Activated naive CD4-positive, alpha-beta T cell treated with anti-CD3 and anti-CD28 coated beads for 36 hours (primary cell): ENCODE measurements at regions of chr12 and their contacts with region 1.

Region 1: DNA sequence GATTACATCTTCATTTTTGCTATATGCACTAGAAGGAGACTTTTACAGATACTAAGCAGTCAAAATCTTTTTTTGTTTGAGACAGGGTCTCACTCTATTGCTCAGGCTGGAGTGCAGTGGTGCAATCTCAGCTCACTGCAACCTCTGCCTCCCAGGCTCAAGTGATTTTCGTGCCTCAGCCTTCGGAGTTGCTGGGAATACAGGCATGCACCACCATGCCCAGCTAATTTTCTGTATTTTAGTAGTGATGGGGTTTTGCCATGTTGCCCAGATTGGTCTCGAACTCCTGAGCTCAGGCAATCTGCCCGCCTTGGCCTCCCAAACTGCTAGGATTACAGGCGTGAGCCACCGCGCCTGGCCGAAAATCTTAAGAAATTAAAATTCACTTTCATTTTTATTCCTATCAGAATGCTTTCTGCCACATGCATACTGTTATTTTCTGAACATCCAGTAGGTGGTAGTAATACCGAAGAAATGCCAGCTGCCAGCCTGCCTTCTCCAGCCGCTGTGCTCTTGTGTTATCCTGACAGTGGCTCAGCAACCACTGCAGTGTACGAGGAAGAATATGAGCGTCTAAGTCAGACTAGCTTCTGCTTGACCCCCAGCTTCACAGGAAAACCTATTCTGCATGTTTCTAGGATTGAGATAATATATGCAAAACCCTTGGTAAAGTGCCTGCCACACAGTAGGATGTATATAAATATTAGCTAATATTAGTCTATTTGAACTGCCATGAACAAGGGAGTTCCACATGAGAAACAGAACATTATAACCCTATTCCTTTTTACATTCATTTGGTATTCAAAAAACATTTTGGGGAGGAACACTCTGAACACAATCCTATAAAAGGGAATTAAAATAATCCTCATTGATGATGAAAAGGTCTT is 54.2 kb downstream of the RPAP3 start:
- DNase-seq: peak; percentile 70
- H3K4me3 Mint-ChIP-seq: no peak overlapping the region
- H3K27ac Mint-ChIP-seq: peak overlapping the region; percentile 26
- H3K4me1 Mint-ChIP-seq: peaks cover 18% of the 10 kb centered on the region
- H3K27me3 Mint-ChIP-seq: no peaks in the 10 kb centered on the region

Region 2: DNA sequence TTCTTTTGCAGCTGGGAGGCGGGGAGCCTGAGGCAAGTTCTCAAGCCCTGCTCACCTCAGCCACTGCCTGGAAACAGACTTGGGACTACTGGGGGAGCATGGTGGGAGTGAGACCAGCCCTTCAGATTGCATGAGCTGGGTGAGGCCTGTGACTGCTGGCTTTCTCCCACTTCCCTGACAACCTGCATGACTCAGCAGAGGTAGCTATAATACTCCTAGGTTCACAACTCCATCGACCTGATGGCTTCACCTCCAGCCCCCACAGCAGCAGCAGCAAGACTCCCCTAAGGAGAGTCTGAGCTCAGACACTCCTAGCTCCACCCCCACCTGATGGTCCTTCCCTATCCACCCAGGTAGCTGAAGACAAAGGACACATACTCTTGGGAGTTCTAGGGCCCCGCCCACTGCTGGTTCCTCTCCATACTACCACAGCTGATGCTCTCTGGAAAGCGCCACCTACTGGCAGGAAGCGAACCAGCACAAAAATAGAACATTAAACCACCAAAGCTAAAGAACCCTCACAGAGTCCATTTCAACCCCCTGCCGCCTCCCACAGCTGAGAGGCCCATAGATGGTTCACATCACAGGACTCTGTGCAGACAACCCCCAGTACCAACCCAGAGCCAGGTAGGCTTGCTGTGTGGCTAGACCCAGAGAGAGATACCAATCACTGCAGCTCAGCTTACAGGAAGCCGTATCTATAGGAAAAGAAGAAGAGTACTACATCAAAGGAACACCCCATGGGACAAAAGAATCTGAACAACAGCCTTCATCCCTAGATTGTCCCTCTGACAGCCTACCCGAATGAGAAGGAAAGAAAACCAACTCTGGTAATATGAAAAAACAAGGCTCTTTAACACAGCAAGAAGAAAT is 14.5 kb before region 1 on chr12:
- CTCF ChIA-PET with region 1: interaction called, 14 read pairs
- intact Hi-C with region 1: no loop called
- DNase-seq: peak; percentile 68
- H3K4me3 Mint-ChIP-seq: no peak overlapping the region
- H3K27ac Mint-ChIP-seq: no peak overlapping the region
- H3K4me1 Mint-ChIP-seq: peaks cover 2% of the 10 kb centered on the region
- H3K27me3 Mint-ChIP-seq: no peaks in the 10 kb centered on the region

Region 3: DNA sequence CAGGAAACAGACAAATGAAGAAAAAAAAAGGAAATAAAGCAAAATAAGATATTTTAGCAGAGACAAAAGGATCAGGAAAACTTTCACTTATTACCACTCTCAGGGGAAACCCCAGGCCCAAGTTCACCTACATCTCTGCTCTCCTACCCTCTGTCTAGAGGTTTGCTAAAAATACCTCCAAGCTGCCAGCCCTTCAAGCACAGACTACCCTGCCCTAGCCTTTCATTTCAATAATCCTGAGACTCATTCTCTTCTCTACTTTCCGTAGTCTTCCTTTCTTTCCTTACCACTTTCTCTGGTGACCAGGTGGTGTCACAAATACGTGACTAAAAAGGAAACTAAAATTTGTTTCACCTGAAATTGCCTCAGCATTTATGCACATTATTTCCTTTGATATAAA is 20.5 kb after region 1 on chr12:
- CTCF ChIA-PET with region 1: interaction called, 6 read pairs
- intact Hi-C with region 1: loop called (anchors 2 kb)
- DNase-seq: no peak
- H3K4me3 Mint-ChIP-seq: no peak overlapping the region
- H3K27ac Mint-ChIP-seq: peak overlapping the region; percentile 5
- H3K4me1 Mint-ChIP-seq: peaks cover 26% of the 10 kb centered on the region
- H3K27me3 Mint-ChIP-seq: no peaks in the 10 kb centered on the region

Region 4: DNA sequence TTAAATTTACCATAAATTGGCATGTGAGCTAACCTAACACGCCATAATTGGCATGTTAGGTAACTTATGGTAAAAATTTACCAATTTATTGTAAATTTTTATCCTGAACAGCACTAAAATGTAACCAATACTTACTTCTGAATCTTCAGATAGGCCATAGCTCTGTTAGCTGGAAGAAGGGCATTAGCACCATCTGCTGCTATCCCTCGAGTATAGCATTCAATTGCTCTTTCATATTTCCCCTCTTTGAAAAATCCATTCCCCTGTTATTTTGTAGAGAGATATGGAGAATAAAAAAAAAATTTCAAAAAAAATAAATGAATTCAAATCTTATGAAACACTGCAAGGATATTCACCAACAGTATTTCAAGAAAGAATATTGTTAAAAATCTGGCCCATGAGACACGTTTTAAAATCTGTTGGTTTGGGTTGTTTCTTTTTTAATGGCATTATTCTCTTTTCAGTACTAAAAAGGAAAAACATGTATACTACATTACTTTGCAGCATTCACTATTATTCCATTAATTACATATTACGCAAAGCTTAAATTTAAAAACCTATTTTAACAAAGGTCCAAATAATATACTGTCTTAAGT is 35.1 kb after region 1 on chr12:
- CTCF ChIA-PET with region 1: interaction called, 26 read pairs
- intact Hi-C with region 1: loop called (anchors 1 kb)
- DNase-seq: peak; percentile 57
- H3K4me3 Mint-ChIP-seq: no peak overlapping the region
- H3K27ac Mint-ChIP-seq: no peak overlapping the region
- H3K4me1 Mint-ChIP-seq: peaks cover 12% of the 10 kb centered on the region
- H3K27me3 Mint-ChIP-seq: no peaks in the 10 kb centered on the region

Region 5: DNA sequence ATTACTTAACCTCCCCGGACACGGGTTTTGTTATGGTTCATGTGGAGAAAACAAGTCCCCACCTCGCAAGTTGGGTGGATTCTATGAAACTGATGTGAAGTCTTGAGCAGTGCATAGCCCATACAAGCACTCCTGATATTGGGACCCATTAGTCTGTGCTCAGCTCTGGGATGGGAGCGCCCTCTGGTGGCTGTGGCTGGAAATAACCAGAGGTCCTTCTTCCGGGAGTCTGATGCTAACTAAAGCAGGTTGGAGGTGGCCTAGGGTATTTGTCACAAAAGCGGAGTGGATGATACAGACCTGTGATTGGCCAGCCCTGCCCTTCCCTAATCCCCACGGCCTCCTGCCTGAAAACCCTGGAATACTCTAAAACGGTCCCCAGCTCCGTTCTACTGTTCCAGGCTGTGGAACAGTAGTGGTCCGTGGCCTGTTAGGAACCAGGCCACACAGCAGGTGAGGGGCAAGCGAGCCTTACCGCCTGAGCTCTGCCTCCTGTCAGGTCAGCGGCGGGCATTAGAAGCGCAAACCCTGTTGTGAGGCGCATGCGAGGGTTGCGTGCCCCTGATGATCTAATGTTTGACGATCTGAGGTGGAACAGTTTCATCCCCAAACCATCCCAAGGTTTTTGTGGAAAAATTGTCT is 127.8 kb after region 1 on chr12:
- CTCF ChIA-PET with region 1: no interaction called
- intact Hi-C with region 1: loop called (anchors 5 kb)
- DNase-seq: peak; percentile 97
- H3K4me3 Mint-ChIP-seq: no peak overlapping the region
- H3K27ac Mint-ChIP-seq: peak overlapping the region; percentile 18
- H3K4me1 Mint-ChIP-seq: peaks cover 30% of the 10 kb centered on the region
- H3K27me3 Mint-ChIP-seq: no peaks in the 10 kb centered on the region

Region 6: DNA sequence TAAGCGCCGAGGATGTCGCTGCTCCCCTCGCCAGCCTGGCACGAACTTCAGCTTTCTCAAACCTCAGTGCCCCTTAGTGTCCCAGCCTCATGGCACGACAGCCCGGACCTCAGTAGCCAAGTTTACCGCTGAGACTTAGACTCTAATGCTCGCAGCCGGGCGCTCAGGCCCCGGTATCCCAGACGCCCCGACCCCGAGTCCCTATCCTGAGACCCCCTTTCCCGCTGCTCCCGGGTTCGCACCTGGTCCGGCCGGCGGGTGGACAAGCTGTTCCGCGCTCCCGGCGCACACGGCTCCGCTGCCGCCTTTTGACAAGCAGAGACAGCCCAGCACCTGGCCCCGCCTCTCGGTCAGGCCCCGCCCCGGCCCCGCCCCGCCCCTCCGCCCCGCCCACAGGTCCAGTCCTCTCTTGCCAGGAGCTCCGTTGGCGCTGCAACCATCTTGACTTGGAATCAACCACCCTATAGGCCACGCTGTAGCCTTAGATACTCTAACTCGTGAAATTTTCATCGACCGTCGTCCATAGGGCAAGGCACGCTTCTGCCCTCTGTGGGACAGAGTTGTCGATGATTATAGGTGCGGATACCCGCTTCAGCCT is 253.2 kb after region 1 on chr12 and contains the start of gene VDR:
- CTCF ChIA-PET with region 1: no interaction called
- intact Hi-C with region 1: loop called (anchors 5 kb)
- DNase-seq: peak; percentile 81
- H3K4me3 Mint-ChIP-seq: peak within 1 kb of the TSS; percentile 98
- H3K27ac Mint-ChIP-seq: peak within 1 kb of the TSS; percentile 93
- H3K4me1 Mint-ChIP-seq: peaks cover 42% of the 10 kb centered on the region
- H3K27me3 Mint-ChIP-seq: peaks cover 19% of the 10 kb centered on the region
- total RNA-seq, gene VDR: 56.4 to 57.7 TPM